ENCODE measurements at regions of chr1 and their contacts with region 1.

Region 1: GRCh38 chr1:40032240-40032891 is 8.2 kb upstream of the CAP1 start:
- DNase-seq: no peak
- ATAC-seq: peak; percentile 95
- H3K4me3 ChIP-seq: no peak overlapping the region
- H3K27ac ChIP-seq: no peak overlapping the region
- H3K4me1 ChIP-seq: peaks cover 9% of the 10 kb centered on the region
- H3K27me3 ChIP-seq: no peaks in the 10 kb centered on the region
- CTCF ChIP-seq: peak; percentile 73 to 86 (median 85)
- EP300 ChIP-seq: no peak
- POLR2A ChIP-seq: no peak
- RAD21 ChIP-seq: peak; percentile 92

Region 2: DNA sequence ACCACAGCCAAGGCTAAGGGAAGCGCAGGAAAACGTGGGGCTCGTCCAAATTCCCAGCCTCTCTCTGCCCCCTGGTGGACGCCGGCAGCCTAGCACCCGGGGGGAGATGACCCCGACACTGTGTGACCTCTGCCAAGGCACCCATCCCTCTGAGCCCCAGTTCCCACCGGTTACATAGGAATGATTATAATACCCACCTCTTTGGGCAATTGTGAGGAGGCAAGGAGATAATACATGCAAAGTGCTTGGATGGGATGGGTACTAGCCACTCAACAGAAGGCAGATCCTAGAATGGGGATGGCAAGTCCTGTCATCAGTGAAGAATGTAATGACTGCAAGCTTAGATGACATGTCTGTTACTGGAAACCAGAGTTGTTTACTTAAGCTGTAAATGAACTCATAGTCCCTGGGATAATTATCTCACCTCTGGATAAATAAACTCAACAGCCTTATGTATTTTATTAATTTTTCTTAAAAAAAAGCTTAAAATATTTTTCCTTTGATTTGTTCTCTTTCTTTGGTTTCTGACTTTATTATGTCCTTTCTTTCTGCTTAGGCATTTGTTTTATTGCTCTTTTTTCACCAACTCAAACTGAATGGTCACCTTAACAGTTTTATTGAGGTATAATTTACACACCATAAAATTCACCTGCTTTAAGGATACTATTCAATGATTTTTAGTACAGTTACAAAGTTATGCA is 232.4 kb before region 1 on chr1:
- CTCF ChIA-PET with region 1: interaction called, 13 read pairs
- POLR2A ChIA-PET with region 1: no interaction called
- RAD21 ChIA-PET with region 1: no interaction called
- SMC1A ChIA-PET with region 1: no interaction called
- in situ Hi-C with region 1: no loop called
- intact Hi-C with region 1: no loop called
- DNase-seq: no peak
- ATAC-seq: peak; percentile 85
- H3K4me3 ChIP-seq: no peak overlapping the region
- H3K27ac ChIP-seq: peak overlapping the region; percentile 53; the same call in 1 of the 2 replicates
- H3K4me1 ChIP-seq: peaks cover 6% of the 10 kb centered on the region
- H3K27me3 ChIP-seq: no peaks in the 10 kb centered on the region
- CTCF ChIP-seq: peak; percentile 65 to 88 (median 81)
- EP300 ChIP-seq: no peak
- POLR2A ChIP-seq: no peak
- RAD21 ChIP-seq: peak; percentile 58

Region 3: GRCh38 chr1:39907528-39908453 is 124.6 kb before region 1 on chr1:
- CTCF ChIA-PET with region 1: interaction called, 6 read pairs
- POLR2A ChIA-PET with region 1: no interaction called
- RAD21 ChIA-PET with region 1: interaction called, 9 read pairs
- SMC1A ChIA-PET with region 1: interaction called, 10 read pairs
- in situ Hi-C with region 1: no loop called
- intact Hi-C with region 1: no loop called
- DNase-seq: peak; percentile 30
- ATAC-seq: peak; percentile 49
- H3K4me3 ChIP-seq: no peak overlapping the region
- H3K27ac ChIP-seq: peak overlapping the region; percentile 58
- H3K4me1 ChIP-seq: 0 out of 2 replicates have a peak, but pooled peaks cover 5% of the 10 kb centered on the region
- H3K27me3 ChIP-seq: no peaks in the 10 kb centered on the region; a peak in 1 of 4 replicates
- CTCF ChIP-seq: no peak
- EP300 ChIP-seq: no peak
- POLR2A ChIP-seq: no peak
- RAD21 ChIP-seq: no peak

Region 4: GRCh38 chr1:39973503-39974135 is 58.7 kb before region 1 on chr1:
- CTCF ChIA-PET with region 1: interaction called, 185 read pairs
- POLR2A ChIA-PET with region 1: interaction called, 6 read pairs
- RAD21 ChIA-PET with region 1: interaction called, 55 read pairs
- SMC1A ChIA-PET with region 1: interaction called, 93 read pairs
- in situ Hi-C with region 1: no loop called
- intact Hi-C with region 1: loop called (anchors 1 kb)
- DNase-seq: no peak
- ATAC-seq: peak; percentile 87
- H3K4me3 ChIP-seq: no peak overlapping the region
- H3K27ac ChIP-seq: no peak overlapping the region
- H3K4me1 ChIP-seq: peaks cover 3% of the 10 kb centered on the region
- H3K27me3 ChIP-seq: no peaks in the 10 kb centered on the region
- CTCF ChIP-seq: peak; percentile 97
- EP300 ChIP-seq: no peak
- POLR2A ChIP-seq: no peak
- RAD21 ChIP-seq: peak; percentile 100

Region 5: DNA sequence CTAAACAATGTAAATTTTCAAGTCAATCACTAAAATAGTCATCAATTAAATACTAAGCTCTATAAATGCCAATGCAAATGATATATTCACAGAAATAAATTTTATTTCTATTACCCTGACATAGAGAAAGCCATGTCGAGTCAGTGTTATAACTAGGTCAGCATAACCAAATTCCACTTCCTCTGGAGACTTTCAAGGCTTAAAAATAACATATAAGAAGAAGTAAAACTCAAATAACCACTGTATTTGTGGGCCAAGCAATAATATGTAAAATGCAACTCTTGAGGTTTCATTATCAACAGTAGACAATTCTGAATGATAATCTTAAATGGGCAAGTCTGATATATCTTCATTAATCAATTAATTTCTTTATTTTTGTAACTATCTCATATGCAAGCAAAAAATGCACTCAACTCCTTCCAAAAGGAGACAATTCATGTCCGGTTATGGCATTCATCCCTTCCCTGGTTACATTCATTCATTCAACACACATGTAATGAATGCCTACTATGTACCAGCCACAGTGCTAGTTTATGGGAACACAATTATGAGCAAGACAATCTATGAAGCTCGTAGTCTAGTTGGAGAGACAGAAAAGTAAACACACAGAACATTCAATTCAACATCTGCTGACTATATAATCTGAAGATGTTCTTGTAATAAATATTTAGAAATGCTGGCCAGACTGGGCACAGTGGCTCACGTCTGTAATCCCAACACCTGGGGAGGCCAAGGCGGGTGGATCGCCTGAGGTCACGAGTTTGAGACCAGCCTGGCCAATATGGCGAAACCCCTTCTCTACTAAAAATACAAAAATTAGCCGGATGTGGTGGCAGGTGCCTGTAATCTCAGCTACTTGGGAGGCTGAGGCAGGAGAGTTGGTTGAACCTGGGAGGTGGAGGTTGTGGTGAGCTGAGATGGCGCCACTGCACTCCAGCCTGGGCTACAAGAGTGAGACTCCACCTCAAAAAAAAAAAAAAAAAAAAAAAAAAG is 28.9 kb before region 1 on chr1:
- CTCF ChIA-PET with region 1: interaction called, 21 read pairs
- POLR2A ChIA-PET with region 1: interaction called, 7 read pairs
- RAD21 ChIA-PET with region 1: interaction called, 8 read pairs
- SMC1A ChIA-PET with region 1: interaction called, 28 read pairs
- in situ Hi-C with region 1: no loop called
- intact Hi-C with region 1: no loop called
- DNase-seq: peak; percentile 53
- ATAC-seq: peak; percentile 95
- H3K4me3 ChIP-seq: 0 out of 2 replicates have a peak overlapping the region, but pooled peaks have one; percentile 16
- H3K27ac ChIP-seq: peak overlapping the region; percentile 89
- H3K4me1 ChIP-seq: peaks cover 42% of the 10 kb centered on the region
- H3K27me3 ChIP-seq: no peaks in the 10 kb centered on the region
- CTCF ChIP-seq: no peak
- EP300 ChIP-seq: no peak
- POLR2A ChIP-seq: no peak
- RAD21 ChIP-seq: no peak

Region 6: DNA sequence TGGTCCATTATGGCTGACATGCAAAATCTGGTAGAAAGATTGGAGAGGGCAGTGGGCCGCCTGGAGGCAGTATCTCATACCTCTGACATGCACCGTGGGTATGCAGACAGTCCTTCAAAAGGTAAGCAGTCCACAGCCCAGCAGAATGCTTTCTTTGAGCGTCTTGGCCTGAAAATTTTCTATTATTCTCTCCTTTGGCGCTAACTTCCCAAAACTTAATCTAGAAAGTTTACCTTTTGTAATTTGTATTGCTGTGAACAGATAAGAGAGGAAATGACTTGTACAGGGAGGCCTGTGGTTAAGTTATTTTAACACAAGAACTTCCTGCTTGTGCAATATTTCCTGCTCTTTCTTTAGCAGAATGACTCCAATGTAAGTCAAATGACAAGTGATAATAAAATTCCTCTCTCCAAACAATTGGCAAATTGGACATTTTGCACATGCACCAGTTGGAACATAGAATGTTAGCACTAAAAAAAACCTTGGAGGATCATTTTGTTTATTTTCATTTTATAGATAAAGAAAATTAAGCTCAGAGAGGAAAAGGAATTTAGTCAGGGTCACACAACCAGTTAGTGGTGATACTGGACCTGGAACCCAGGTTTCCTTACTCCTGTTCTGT is 27.1 kb after region 1 on chr1:
- CTCF ChIA-PET with region 1: interaction called, 32 read pairs
- POLR2A ChIA-PET with region 1: no interaction called
- RAD21 ChIA-PET with region 1: interaction called, 6 read pairs
- SMC1A ChIA-PET with region 1: interaction called, 25 read pairs
- in situ Hi-C with region 1: no loop called
- intact Hi-C with region 1: no loop called
- DNase-seq: no peak
- ATAC-seq: peak; percentile 82
- H3K4me3 ChIP-seq: peak overlapping the region; percentile 25; the same call in 1 of the 2 replicates
- H3K27ac ChIP-seq: peak overlapping the region; percentile 84
- H3K4me1 ChIP-seq: peaks cover 47% of the 10 kb centered on the region
- H3K27me3 ChIP-seq: no peaks in the 10 kb centered on the region
- CTCF ChIP-seq: peak; percentile 10 to 15 (median 11); a peak in 2 of 6 replicates
- EP300 ChIP-seq: no peak
- POLR2A ChIP-seq: no peak
- RAD21 ChIP-seq: no peak